GM12878 (cell line): ENCODE measurements at regions of chr19 and their contacts with region 1.

Region 1: GRCh38 chr19:6521718-6522646 is 8.8 kb upstream of the TNFSF9 start:
- DNase-seq: peak; percentile 95
- ATAC-seq: peak; percentile 70
- H3K4me3 ChIP-seq: peak overlapping the region; percentile 60
- H3K27ac ChIP-seq: peak overlapping the region; percentile 99
- H3K4me1 ChIP-seq: peaks cover 52% of the 10 kb centered on the region
- H3K27me3 ChIP-seq: no peaks in the 10 kb centered on the region
- CTCF ChIP-seq: no peak
- EP300 ChIP-seq: peak; percentile 85 to 86; a peak in 2 of 4 replicates
- POLR2A ChIP-seq: peak; percentile 82
- RAD21 ChIP-seq: no peak

Region 2: GRCh38 chr19:6535558-6536137 is 13.7 kb after region 1 on chr19:
- CTCF ChIA-PET with region 1: interaction called, 10 read pairs
- POLR2A ChIA-PET with region 1: interaction called, 23 read pairs
- RAD21 ChIA-PET with region 1: interaction called, 16 read pairs
- SMC1A ChIA-PET with region 1: interaction called, 10 read pairs
- in situ Hi-C with region 1: no loop called
- intact Hi-C with region 1: loop called (anchors 2 kb)
- DNase-seq: no peak
- ATAC-seq: no peak
- H3K4me3 ChIP-seq: 0 out of 2 replicates have a peak overlapping the region, but pooled peaks have one; percentile 17
- H3K27ac ChIP-seq: no peak overlapping the region
- H3K4me1 ChIP-seq: peaks cover 38% of the 10 kb centered on the region
- H3K27me3 ChIP-seq: no peaks in the 10 kb centered on the region
- CTCF ChIP-seq: no peak
- EP300 ChIP-seq: no peak
- POLR2A ChIP-seq: no peak
- RAD21 ChIP-seq: no peak

Region 3: DNA sequence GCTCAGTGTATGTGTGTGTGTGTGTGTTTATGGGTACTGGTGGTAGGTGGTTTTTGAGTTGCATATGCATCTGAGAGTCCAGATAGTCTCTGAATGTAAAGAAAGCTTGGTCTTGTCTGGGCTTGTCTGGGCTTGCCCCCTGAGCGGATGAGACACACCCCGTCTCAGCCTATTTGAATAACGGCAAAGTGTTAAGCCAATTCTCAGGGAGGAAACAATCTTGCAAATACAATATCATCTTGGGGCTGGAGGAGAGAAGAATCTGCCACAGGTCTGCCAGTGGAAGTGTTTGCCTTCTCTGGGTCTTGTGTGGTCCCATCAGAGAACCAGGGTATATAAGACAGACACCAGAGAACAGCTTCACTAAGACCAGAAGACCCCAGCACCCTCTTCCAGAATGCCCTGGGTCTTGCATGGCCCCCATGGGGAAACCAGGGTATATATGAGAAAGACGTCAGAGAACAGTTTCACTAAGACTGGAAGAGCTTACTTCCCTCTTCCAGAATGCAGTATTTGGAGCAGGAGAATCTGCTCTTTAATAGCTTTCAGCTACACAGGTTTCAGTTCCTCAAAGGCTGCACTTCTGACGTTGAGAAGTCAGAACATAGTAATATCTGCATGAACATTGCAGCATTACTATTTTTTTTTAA is 55.6 kb after region 1 on chr19:
- CTCF ChIA-PET with region 1: interaction called, 8 read pairs
- POLR2A ChIA-PET with region 1: interaction called, 12 read pairs
- RAD21 ChIA-PET with region 1: interaction called, 5 read pairs
- SMC1A ChIA-PET with region 1: interaction called, 11 read pairs
- in situ Hi-C with region 1: no loop called
- intact Hi-C with region 1: no loop called
- DNase-seq: peak; percentile 96
- ATAC-seq: peak; percentile 89
- H3K4me3 ChIP-seq: peak overlapping the region; percentile 26; the same call in 1 of the 2 replicates
- H3K27ac ChIP-seq: peak overlapping the region; percentile 99
- H3K4me1 ChIP-seq: peaks cover 50% of the 10 kb centered on the region
- H3K27me3 ChIP-seq: no peaks in the 10 kb centered on the region
- CTCF ChIP-seq: no peak
- EP300 ChIP-seq: peak; percentile 81 to 98
- POLR2A ChIP-seq: peak; percentile 69
- RAD21 ChIP-seq: no peak

Region 4: GRCh38 chr19:6663236-6664201 is 141.5 kb after region 1 on chr19:
- CTCF ChIA-PET with region 1: interaction called, 3 read pairs
- POLR2A ChIA-PET with region 1: interaction called, 15 read pairs
- RAD21 ChIA-PET with region 1: interaction called, 6 read pairs
- SMC1A ChIA-PET with region 1: no interaction called
- in situ Hi-C with region 1: no loop called
- intact Hi-C with region 1: no loop called
- DNase-seq: no peak
- ATAC-seq: peak; percentile 8; the same call in 2 of the 3 replicates
- H3K4me3 ChIP-seq: no peak overlapping the region
- H3K27ac ChIP-seq: peak overlapping the region; percentile 40; the same call in 1 of the 2 replicates
- H3K4me1 ChIP-seq: peaks cover 26% of the 10 kb centered on the region
- H3K27me3 ChIP-seq: no peaks in the 10 kb centered on the region
- CTCF ChIP-seq: no peak
- EP300 ChIP-seq: no peak
- POLR2A ChIP-seq: no peak; the same call in 1 of the 2 replicates
- RAD21 ChIP-seq: no peak